GM12878 (cell line): ENCODE measurements at regions of chr3 and their contacts with region 1.

Region 1: DNA sequence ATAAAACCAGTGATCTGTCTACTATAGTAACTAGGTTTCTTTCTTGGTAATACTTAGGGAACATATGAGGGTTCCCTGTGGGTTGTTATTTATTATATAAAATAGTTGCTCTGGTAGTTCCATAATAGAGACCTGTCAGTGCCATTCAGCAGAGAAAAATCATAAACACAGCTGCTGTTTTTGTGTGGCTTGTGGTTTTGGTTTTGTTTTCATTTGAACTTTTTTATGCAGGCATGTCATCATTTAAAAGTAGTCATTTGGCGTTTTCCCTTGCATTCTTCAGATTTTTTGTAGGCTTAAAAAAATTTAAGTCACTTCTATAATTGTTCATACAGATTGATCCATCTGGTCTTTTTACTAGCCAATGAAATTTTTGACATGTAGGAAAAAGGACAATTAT is 47.9 kb downstream of the PIK3CA start:
- DNase-seq: peak; percentile 24
- ATAC-seq: peak; percentile 88
- H3K4me3 ChIP-seq: no peak overlapping the region
- H3K27ac ChIP-seq: no peak overlapping the region
- H3K4me1 ChIP-seq: peaks cover 7% of the 10 kb centered on the region
- H3K27me3 ChIP-seq: no peaks in the 10 kb centered on the region
- CTCF ChIP-seq: no peak
- EP300 ChIP-seq: peak in 1 of 2 experiments; percentile 61; a peak in 1 of 4 replicates
- POLR2A ChIP-seq: no peak
- RAD21 ChIP-seq: no peak

Region 2: DNA sequence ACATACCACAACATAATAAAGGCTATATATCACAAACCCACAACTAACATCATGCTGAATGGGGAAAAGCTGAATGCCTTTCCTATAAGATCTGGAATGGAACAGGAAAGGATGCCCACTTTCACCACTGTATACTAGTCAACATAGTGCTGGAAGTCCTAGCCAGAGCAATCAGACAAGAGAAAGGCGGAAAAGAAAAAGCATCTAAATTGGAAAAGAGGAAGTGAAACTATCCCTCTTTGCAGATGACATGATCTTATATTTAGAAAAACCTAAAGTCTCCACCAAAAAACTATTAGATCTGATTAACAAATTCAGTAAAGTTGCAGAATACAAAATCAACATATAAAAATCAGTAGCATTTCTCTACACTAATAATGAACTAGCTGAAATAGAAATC is 62.5 kb before region 1 on chr3:
- CTCF ChIA-PET with region 1: no interaction called
- POLR2A ChIA-PET with region 1: no interaction called
- RAD21 ChIA-PET with region 1: no interaction called
- SMC1A ChIA-PET with region 1: no interaction called
- in situ Hi-C with region 1: no loop called
- intact Hi-C with region 1: no loop called
- DNase-seq: no peak
- ATAC-seq: no peak
- H3K4me3 ChIP-seq: no peak overlapping the region
- H3K27ac ChIP-seq: no peak overlapping the region
- H3K4me1 ChIP-seq: 0 out of 2 replicates have a peak, but pooled peaks cover 4% of the 10 kb centered on the region
- H3K27me3 ChIP-seq: no peaks in the 10 kb centered on the region
- CTCF ChIP-seq: no peak
- EP300 ChIP-seq: no peak
- POLR2A ChIP-seq: no peak
- RAD21 ChIP-seq: no peak

Region 3: GRCh38 chr3:179166561-179167201 is 29.4 kb before region 1 on chr3:
- CTCF ChIA-PET with region 1: interaction called, 3 read pairs
- POLR2A ChIA-PET with region 1: no interaction called
- RAD21 ChIA-PET with region 1: no interaction called
- SMC1A ChIA-PET with region 1: interaction called, 10 read pairs
- in situ Hi-C with region 1: no loop called
- intact Hi-C with region 1: no loop called
- DNase-seq: no peak
- ATAC-seq: peak; percentile 43
- H3K4me3 ChIP-seq: no peak overlapping the region
- H3K27ac ChIP-seq: no peak overlapping the region
- H3K4me1 ChIP-seq: peaks cover 3% of the 10 kb centered on the region; the same call in 1 of the 2 replicates
- H3K27me3 ChIP-seq: no peaks in the 10 kb centered on the region
- CTCF ChIP-seq: no peak
- EP300 ChIP-seq: no peak
- POLR2A ChIP-seq: no peak
- RAD21 ChIP-seq: no peak

Region 4: GRCh38 chr3:179182902-179183301 is 13.2 kb before region 1 on chr3:
- CTCF ChIA-PET with region 1: interaction called, 3 read pairs
- POLR2A ChIA-PET with region 1: no interaction called
- RAD21 ChIA-PET with region 1: interaction called, 3 read pairs
- SMC1A ChIA-PET with region 1: interaction called, 12 read pairs
- in situ Hi-C with region 1: no loop called
- intact Hi-C with region 1: no loop called
- DNase-seq: no peak
- ATAC-seq: no peak
- H3K4me3 ChIP-seq: no peak overlapping the region
- H3K27ac ChIP-seq: no peak overlapping the region
- H3K4me1 ChIP-seq: peaks cover 5% of the 10 kb centered on the region; the same call in 1 of the 2 replicates
- H3K27me3 ChIP-seq: no peaks in the 10 kb centered on the region
- CTCF ChIP-seq: no peak
- EP300 ChIP-seq: no peak
- POLR2A ChIP-seq: no peak
- RAD21 ChIP-seq: no peak